ENCODE measurements at regions of chr18 and their contacts with region 1.

Region 1: GRCh38 chr18:74495581-74496507 is at the start of gene CNDP2:
- DNase-seq: peak; percentile 100
- H3K4me3 Mint-ChIP-seq: peak within 1 kb of the TSS; percentile 98
- H3K27ac Mint-ChIP-seq: peak within 1 kb of the TSS; percentile 98
- H3K4me1 Mint-ChIP-seq: peaks cover 38% of the 10 kb centered on the region
- H3K27me3 Mint-ChIP-seq: no peaks in the 10 kb centered on the region
- total RNA-seq, gene CNDP2: 101 to 107 TPM

Region 2: DNA sequence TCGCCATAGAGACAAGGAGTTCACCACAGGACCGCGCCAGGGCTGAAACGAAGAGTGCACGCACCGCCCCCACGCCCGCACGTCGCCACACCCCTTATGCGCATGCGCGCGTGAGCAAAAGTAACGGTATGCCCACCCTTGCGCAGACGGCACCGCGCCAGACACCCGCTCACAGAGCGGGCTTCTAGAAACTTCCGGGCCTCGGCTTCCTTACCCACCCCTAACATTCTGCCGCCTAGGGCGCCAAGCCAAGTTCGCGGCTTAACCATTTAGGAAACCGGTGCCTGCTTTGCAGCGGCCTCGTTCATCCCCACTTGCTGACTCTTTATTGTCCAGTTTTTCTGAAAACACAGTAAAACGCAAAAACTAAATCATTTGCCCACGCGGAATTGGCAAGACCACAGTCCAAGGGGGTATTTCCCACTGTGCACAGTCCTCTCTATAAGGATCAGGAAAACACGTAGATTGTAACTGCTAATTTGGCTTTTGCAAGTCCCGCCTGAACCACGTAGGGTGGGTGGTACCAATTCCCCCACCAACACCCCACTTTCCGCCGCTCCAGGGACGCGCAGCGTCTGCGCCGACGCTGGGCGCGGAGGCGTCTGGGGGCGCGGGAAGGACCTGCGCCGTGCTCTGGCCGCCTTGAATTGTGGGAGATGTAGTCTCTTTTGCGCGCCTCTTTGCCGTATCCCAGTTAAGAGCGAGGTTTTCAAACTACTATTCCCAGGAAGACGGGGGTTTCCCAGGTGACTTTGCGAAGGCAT is 347.9 kb before region 1 on chr18 and contains the starts of genes FBXO15 and TIMM21:
- CTCF ChIA-PET with region 1: no interaction called
- intact Hi-C with region 1: loop called (anchors 1 kb)
- DNase-seq: peak; percentile 95
- H3K4me3 Mint-ChIP-seq: peak within 1 kb of the TSS; percentile 96
- H3K27ac Mint-ChIP-seq: peak within 1 kb of the TSS; percentile 97
- H3K4me1 Mint-ChIP-seq: peaks cover 42% of the 10 kb centered on the region
- H3K27me3 Mint-ChIP-seq: no peaks in the 10 kb centered on the region
- total RNA-seq, gene FBXO15: 1.2 to 1.3 TPM
- total RNA-seq, gene TIMM21: 35.6 to 37.7 TPM

Region 3: DNA sequence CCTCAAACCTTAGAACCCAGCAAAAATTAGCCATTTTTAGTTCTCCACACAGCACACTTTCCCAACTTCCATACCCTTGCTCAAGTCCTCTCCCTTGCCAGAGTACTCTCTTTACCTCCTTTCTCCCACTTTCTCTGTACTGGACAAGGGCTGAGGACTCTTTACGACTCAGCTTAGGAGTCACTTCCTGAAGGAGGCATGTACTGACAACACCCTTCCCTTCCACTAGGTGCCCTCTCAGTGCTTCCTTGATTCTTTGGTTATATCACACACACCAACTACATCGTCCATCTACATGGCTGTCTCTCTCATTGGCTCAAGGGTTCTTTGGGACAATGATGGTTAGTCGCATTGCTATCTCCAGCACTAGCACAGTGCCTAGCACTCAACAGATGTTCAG is 185.4 kb before region 1 on chr18:
- CTCF ChIA-PET with region 1: no interaction called
- intact Hi-C with region 1: loop called (anchors 1 kb)
- DNase-seq: peak; percentile 18
- H3K4me3 Mint-ChIP-seq: no peak overlapping the region
- H3K27ac Mint-ChIP-seq: no peak overlapping the region
- H3K4me1 Mint-ChIP-seq: no peaks in the 10 kb centered on the region
- H3K27me3 Mint-ChIP-seq: peaks cover 20% of the 10 kb centered on the region

Region 4: GRCh38 chr18:74331404-74331803 is 164.4 kb before region 1 on chr18:
- CTCF ChIA-PET with region 1: no interaction called
- intact Hi-C with region 1: no loop called
- DNase-seq: no peak
- H3K4me3 Mint-ChIP-seq: no peak overlapping the region
- H3K27ac Mint-ChIP-seq: no peak overlapping the region
- H3K4me1 Mint-ChIP-seq: no peaks in the 10 kb centered on the region
- H3K27me3 Mint-ChIP-seq: peaks cover 6% of the 10 kb centered on the region

Region 5: GRCh38 chr18:74378179-74378682 is 117.6 kb before region 1 on chr18:
- CTCF ChIA-PET with region 1: interaction called, 11 read pairs
- intact Hi-C with region 1: loop called (anchors 5 kb)
- DNase-seq: peak; percentile 50
- H3K4me3 Mint-ChIP-seq: peak overlapping the region; percentile 0
- H3K27ac Mint-ChIP-seq: peak overlapping the region; percentile 3
- H3K4me1 Mint-ChIP-seq: peaks cover 49% of the 10 kb centered on the region
- H3K27me3 Mint-ChIP-seq: no peaks in the 10 kb centered on the region

Region 6: DNA sequence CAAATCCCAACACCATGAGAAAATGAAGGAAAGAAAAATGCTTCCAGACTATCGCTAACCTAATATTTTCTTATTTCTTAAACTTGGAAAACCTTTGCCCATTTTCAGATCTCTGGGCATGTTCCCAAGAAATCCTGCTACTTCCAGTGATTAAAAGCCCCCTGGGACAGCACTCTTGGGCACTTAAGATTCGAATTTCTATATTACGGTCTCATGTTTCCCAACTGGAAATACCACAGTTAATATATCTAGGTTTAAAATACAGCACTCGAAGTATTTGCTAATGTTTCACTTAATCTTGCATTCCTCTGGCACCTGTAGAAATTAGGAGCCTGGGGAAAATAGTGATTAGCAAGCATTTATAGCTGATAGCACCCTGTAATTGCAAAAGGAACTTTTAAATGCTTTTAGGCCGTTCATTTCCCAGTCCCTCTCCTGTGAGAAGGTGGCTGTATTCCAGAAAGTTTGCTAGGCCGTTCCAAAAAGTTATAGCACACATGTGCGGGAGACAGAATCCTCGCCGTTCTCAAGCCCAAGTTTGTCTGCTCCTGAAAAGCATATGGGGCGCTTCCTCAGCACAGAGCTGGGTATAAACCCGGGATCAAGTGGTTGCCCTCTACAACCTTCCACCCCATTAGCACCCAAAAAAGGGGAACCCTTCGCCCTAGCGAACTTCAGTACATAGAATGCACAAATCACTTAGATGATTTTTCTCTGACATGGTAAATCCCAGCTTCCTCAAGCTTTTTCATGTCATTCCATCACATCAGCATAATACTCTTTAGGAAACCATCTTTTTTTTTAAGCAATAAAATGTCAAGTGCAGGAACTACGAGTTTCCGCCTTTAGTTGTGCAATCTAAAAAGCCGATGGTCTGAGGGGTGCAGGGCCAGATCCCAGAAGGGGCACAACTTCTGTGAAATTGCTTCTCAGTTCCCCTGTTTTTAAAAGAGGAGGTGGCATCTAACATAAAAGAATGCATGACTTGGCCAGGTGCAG is 99.4 kb before region 1 on chr18:
- CTCF ChIA-PET with region 1: no interaction called
- intact Hi-C with region 1: no loop called
- DNase-seq: no peak
- H3K4me3 Mint-ChIP-seq: no peak overlapping the region
- H3K27ac Mint-ChIP-seq: no peak overlapping the region
- H3K4me1 Mint-ChIP-seq: peaks cover 19% of the 10 kb centered on the region
- H3K27me3 Mint-ChIP-seq: peaks cover 2% of the 10 kb centered on the region

Region 7: DNA sequence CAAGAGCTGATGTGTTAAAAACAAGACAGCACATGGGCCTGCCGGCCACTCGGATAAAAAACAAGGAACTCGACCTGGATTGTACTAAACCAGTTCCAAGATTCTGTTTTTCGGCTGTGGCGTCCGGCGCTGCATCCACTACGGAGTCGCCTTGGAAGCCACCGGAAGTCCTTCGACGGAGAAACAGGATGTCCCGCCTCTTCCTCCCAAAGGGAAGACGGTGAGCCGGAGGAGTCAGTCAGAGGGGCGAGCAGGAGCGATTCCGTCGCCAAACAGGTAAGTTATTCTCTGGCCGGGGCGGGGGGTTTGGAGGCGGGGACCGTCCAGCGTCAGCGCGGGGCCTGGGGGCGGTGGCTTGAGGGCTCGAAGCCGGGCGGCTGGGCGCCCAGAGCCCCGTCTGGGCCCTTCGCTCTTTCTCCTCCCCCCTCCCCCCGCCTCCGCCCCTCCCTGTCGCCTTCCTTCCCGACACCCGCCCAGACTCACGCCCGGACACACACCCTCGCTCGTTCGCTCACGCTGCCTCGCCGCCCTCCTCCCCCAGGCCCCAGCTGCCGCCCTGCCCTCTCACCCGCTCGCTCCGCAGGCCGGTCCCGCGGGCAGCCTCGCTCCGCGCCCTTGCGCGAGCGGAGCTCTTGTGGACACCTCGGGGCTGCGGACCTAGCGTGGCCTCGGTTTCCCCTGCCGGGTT is 102.0 kb after region 1 on chr18 and contains the start of gene ZNF407:
- CTCF ChIA-PET with region 1: no interaction called
- intact Hi-C with region 1: loop called (anchors 1 kb)
- DNase-seq: peak; percentile 91
- H3K4me3 Mint-ChIP-seq: peak within 1 kb of the TSS; percentile 86
- H3K27ac Mint-ChIP-seq: peak within 1 kb of the TSS; percentile 98
- H3K4me1 Mint-ChIP-seq: peaks cover 38% of the 10 kb centered on the region
- H3K27me3 Mint-ChIP-seq: no peaks in the 10 kb centered on the region
- total RNA-seq, gene ZNF407: 9.8 to 9.9 TPM

Region 8: DNA sequence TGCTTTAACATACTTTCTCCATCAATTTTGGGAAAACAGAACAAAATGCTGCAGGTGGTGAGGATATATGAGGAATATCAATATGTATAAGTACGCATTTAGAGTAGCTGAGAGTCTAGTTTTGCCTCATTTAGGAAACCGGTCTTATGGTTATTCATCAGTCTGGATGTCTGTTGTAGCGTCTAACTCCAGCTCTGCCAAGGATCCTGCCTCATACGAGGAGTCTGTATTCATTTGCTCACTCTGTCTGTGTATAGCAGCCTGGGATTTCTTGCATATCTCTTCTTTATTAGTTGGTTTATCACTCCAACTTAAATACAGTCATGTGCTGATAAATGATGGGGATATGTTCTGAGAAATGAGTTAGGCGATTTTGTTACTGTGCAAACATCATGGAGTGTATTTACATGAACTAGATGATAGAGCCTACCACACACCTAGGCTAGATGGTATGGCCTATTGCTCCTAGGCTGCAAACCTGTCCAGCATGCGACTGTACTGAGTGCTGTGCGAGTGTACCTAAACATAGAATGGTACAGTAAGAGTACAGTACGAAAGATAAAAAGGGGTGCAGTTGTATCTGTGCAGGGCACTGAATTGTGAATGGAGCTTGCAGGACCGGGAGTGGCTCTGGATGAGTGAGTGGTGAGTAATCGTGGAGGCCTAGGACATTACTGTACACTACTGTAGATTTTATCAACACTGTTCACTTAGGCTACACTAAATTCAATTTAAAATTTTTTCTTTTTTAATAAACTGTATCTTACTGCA is 250.0 kb after region 1 on chr18:
- CTCF ChIA-PET with region 1: no interaction called
- intact Hi-C with region 1: no loop called
- DNase-seq: no peak
- H3K4me3 Mint-ChIP-seq: no peak overlapping the region
- H3K27ac Mint-ChIP-seq: no peak overlapping the region
- H3K4me1 Mint-ChIP-seq: no peaks in the 10 kb centered on the region
- H3K27me3 Mint-ChIP-seq: no peaks in the 10 kb centered on the region

Region 9: GRCh38 chr18:74760446-74760845 is 264.6 kb after region 1 on chr18:
- CTCF ChIA-PET with region 1: no interaction called
- intact Hi-C with region 1: no loop called
- DNase-seq: no peak
- H3K4me3 Mint-ChIP-seq: no peak overlapping the region
- H3K27ac Mint-ChIP-seq: no peak overlapping the region
- H3K4me1 Mint-ChIP-seq: no peaks in the 10 kb centered on the region
- H3K27me3 Mint-ChIP-seq: no peaks in the 10 kb centered on the region

Region 10: DNA sequence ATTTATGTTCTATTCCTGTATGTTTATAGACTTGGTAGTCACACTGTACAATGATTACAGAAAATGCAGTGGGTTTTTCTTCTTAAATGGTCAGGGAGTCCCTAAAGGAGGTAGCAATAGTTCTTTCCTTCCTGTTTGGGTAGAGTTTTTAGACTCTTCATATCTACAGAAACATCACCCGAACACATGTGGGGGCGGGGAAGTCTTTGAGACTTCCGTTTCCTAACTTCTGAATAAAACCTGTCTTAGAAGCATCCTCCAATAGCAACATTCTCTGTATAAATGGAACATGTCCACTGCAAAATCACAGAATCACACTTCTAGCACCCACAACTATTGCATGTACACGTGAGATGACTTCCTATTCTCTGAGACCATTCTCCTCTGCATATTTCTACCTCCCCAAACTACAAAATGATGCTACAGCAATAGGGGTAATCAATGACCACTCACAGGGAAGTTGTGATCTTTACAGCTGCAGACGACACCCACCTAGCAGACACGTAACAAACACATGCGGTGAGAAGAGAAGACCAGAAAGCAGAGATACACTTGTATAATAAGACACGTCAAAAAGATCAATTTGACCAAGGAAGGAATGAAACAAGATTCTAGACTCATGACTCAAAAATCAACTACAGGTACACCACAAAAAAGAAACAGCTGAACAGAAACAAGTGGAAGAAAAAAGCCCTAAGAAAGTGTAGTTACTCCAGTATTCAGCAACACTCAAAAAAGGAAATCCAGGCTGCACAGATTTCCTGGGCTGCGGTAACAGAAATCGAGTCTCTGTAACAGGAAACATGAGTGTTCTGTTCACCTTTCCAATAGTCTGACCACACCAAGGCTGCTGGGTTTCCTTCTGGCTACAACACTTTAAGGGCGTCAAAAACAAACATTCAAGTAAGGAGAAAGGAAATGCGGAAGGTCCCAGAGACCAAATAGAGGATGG is 1878.8 kb after region 1 on chr18:
- CTCF ChIA-PET with region 1: no interaction called
- intact Hi-C with region 1: loop called (anchors 10 kb)
- DNase-seq: peak; percentile 80
- H3K4me3 Mint-ChIP-seq: no peak overlapping the region
- H3K27ac Mint-ChIP-seq: peak overlapping the region; percentile 74
- H3K4me1 Mint-ChIP-seq: peaks cover 46% of the 10 kb centered on the region
- H3K27me3 Mint-ChIP-seq: peaks cover 2% of the 10 kb centered on the region